ENCODE measurements at regions of chr10 and their contacts with region 1.

Region 1: GRCh38 chr10:131885391-131886161 is 15.2 kb upstream of the PPP2R2D start:
- DNase-seq: peak; percentile 65
- H3K4me3 ChIP-seq: no peak overlapping the region
- H3K27ac ChIP-seq: no peak overlapping the region
- H3K4me1 ChIP-seq: no peaks in the 10 kb centered on the region
- H3K27me3 ChIP-seq: no peaks in the 10 kb centered on the region
- CTCF ChIP-seq: peak; percentile 97 to 99
- POLR2A ChIP-seq: no peak

Region 2: DNA sequence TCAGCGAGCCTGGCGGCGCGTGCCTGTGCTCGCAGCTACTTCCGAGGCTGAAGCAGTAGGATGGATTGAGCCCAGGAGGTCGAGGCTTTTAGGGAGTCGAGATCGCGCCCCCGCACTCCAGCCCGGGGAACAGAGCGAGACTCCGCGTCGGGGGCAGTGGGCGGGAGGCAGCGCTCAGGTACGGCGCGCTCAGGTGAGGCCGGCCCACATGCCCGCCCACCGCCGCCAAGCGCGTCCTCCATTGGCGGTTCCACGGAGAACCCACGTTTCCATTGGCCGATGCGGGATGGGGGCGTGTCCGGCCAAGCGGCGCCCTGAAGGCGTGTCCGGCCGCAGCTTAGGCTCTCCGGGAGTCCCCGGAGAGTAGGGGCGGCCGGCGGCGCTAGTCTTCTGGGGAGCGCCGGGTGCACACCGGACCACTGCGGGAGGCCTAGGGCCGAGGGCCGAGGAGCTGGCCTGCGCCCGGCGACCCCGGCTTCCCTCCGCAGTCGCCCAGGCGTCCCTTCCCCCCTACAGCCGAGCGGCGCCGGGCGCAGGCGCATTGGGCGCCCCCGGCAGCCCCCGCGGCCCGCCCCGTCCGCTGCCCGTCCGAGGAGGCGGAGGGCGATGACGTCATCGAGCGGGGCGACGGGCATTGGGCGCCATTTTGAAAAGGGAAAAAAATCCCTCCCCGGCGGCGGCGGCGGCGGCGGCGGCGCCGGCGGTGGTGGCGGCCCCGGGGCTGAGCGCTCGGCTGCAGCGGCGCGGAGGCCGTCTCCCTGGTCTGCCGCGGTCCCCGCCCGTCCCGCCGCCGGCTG is 15.0 kb after region 1 on chr10 and contains the start of gene PPP2R2D:
- CTCF ChIA-PET with region 1: interaction called, 21 read pairs
- POLR2A ChIA-PET with region 1: no interaction called
- dilution Hi-C with region 1: no loop called
- intact Hi-C with region 1: no loop called
- DNase-seq: peak; percentile 90
- H3K4me3 ChIP-seq: peak within 1 kb of the TSS; percentile 87 to 95 (median 93)
- H3K27ac ChIP-seq: peak within 1 kb of the TSS; percentile 72
- H3K4me1 ChIP-seq: peaks cover 23% of the 10 kb centered on the region
- H3K27me3 ChIP-seq: peaks cover 12 to 18% of the 10 kb centered on the region in 2 experiments
- CTCF ChIP-seq: no peak
- POLR2A ChIP-seq: peak; percentile 45
- total RNA-seq, gene PPP2R2D: 33.9 and 36.3 TPM in 2 replicates

Region 3: GRCh38 chr10:131943021-131943814 is 57.6 kb after region 1 on chr10:
- CTCF ChIA-PET with region 1: interaction called, 21 read pairs
- POLR2A ChIA-PET with region 1: no interaction called
- dilution Hi-C with region 1: no loop called
- intact Hi-C with region 1: loop called (anchors 1 kb)
- DNase-seq: no peak
- H3K4me3 ChIP-seq: no peak overlapping the region
- H3K27ac ChIP-seq: no peak overlapping the region
- H3K4me1 ChIP-seq: peaks cover 30% of the 10 kb centered on the region
- H3K27me3 ChIP-seq: no peaks in the 10 kb centered on the region
- CTCF ChIP-seq: peak; percentile 32 to 55
- POLR2A ChIP-seq: no peak

Region 4: GRCh38 chr10:131961777-131962662 is 76.4 kb after region 1 on chr10:
- CTCF ChIA-PET with region 1: no interaction called
- POLR2A ChIA-PET with region 1: no interaction called
- dilution Hi-C with region 1: no loop called
- intact Hi-C with region 1: loop called (anchors 1 kb)
- DNase-seq: no peak
- H3K4me3 ChIP-seq: no peak overlapping the region
- H3K27ac ChIP-seq: no peak overlapping the region
- H3K4me1 ChIP-seq: no peaks in the 10 kb centered on the region
- H3K27me3 ChIP-seq: no peaks in the 10 kb centered on the region
- CTCF ChIP-seq: no peak
- POLR2A ChIP-seq: no peak

Region 5: GRCh38 chr10:131981429-131982184 is 96.0 kb after region 1 on chr10 and contains the start of gene BNIP3:
- CTCF ChIA-PET with region 1: interaction called, 9 read pairs
- POLR2A ChIA-PET with region 1: no interaction called
- dilution Hi-C with region 1: no loop called
- intact Hi-C with region 1: loop called (anchors 1 kb)
- DNase-seq: peak; percentile 97
- H3K4me3 ChIP-seq: peak within 1 kb of the TSS; percentile 88 to 98 (median 94)
- H3K27ac ChIP-seq: peak within 1 kb of the TSS; percentile 30
- H3K4me1 ChIP-seq: peaks cover 24% of the 10 kb centered on the region
- H3K27me3 ChIP-seq: no peaks in the 10 kb centered on the region
- CTCF ChIP-seq: peak in 1 of 2 donors; percentile 4
- POLR2A ChIP-seq: peak; percentile 81
- total RNA-seq, gene BNIP3: 40.1 and 51.4 TPM in 2 replicates

Region 6: GRCh38 chr10:131997366-131998049 is 111.9 kb after region 1 on chr10:
- CTCF ChIA-PET with region 1: interaction called, 11 read pairs
- POLR2A ChIA-PET with region 1: no interaction called
- dilution Hi-C with region 1: no loop called
- intact Hi-C with region 1: no loop called
- DNase-seq: peak; percentile 75
- H3K4me3 ChIP-seq: peak overlapping the region in 1 of 3 experiments; percentile 13
- H3K27ac ChIP-seq: no peak overlapping the region
- H3K4me1 ChIP-seq: peaks cover 7% of the 10 kb centered on the region
- H3K27me3 ChIP-seq: peaks cover 0 to 2% of the 10 kb centered on the region in 2 experiments
- CTCF ChIP-seq: no peak
- POLR2A ChIP-seq: no peak

Region 7: DNA sequence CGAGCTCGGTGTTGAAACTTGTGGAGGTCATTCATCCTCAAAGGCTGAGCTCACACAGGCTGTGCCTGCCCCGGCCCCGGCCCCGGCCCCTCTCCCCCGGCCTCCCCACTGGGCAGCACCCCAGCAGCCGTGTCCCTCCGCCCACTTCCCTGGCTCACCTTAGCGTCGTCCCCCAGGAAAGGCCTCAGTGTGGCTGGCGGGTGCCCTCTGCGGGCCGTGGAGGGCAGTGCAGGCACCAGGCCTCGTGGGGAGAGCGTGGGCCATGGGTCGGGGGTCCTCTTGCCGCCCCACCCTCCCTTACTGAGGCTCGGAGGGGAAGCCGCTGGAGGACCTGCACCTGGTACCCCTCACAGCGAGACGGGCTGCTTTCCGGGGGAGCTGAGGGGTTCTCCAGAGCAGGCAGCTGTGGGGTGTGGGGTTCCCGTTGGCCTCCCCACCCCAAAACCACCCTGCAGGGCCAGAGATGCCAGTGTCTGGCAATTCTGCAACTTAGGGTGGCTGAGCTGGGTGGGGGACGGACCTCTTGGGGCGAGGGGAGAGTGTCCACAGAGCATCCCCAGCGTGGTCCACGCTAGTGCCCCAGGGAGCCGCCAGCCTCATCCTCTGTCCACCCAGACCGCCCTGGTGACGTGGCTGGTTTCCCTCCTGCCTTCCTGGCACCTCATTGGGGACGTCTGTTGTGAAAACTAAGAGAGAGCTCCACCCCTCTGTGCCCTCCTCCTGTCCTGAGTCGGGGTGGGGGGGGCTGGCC is 257.0 kb after region 1 on chr10:
- CTCF ChIA-PET with region 1: interaction called, 21 read pairs
- POLR2A ChIA-PET with region 1: no interaction called
- dilution Hi-C with region 1: no loop called
- intact Hi-C with region 1: no loop called
- DNase-seq: no peak
- H3K4me3 ChIP-seq: no peak overlapping the region
- H3K27ac ChIP-seq: no peak overlapping the region
- H3K4me1 ChIP-seq: no peaks in the 10 kb centered on the region
- H3K27me3 ChIP-seq: peaks cover 0 to 2% of the 10 kb centered on the region in 2 experiments
- CTCF ChIP-seq: peak; percentile 57 to 80
- POLR2A ChIP-seq: no peak

Measured in endothelial cell of umbilical vein (primary cell).